Endothelial cell of umbilical vein (primary cell): ENCODE measurements at regions of chr15 and their contacts with region 1.

Region 1: DNA sequence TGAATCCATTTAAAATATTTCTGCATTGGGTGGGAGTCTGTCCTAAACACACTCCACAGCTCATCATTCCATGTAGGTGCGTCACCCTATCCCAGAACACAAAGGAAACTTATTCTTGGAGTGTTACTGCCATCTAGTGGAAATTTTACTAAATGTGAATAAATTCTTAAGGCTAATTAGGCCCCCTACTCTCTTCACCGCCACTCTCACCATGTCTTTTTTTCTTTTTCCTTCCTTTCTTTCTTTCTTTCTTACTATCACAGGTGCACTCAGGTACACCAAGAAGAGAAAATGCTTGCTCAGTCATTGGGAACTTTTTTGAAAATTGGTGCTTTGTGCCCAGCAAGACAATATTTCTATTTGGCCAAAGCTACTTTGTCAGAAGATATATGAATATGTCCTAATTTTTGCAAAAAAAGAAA is 26.4 kb upstream of the ATP8B4 start:
- DNase-seq: peak; percentile 73
- H3K4me3 ChIP-seq: no peak overlapping the region
- H3K27ac ChIP-seq: no peak overlapping the region
- H3K4me1 ChIP-seq: peaks cover 2% of the 10 kb centered on the region
- H3K27me3 ChIP-seq: no peaks in the 10 kb centered on the region
- CTCF ChIP-seq: peak; percentile 16 to 25
- POLR2A ChIP-seq: no peak

Region 2: GRCh38 chr15:48855501-48856440 is 1289.7 kb before region 1 on chr15:
- CTCF ChIA-PET with region 1: interaction called, 69 read pairs
- POLR2A ChIA-PET with region 1: no interaction called
- dilution Hi-C with region 1: no loop called
- intact Hi-C with region 1: no loop called
- DNase-seq: peak; percentile 61
- H3K4me3 ChIP-seq: no peak overlapping the region
- H3K27ac ChIP-seq: no peak overlapping the region
- H3K4me1 ChIP-seq: no peaks in the 10 kb centered on the region
- H3K27me3 ChIP-seq: no peaks in the 10 kb centered on the region
- CTCF ChIP-seq: peak; percentile 43 to 59
- POLR2A ChIP-seq: no peak

Region 3: DNA sequence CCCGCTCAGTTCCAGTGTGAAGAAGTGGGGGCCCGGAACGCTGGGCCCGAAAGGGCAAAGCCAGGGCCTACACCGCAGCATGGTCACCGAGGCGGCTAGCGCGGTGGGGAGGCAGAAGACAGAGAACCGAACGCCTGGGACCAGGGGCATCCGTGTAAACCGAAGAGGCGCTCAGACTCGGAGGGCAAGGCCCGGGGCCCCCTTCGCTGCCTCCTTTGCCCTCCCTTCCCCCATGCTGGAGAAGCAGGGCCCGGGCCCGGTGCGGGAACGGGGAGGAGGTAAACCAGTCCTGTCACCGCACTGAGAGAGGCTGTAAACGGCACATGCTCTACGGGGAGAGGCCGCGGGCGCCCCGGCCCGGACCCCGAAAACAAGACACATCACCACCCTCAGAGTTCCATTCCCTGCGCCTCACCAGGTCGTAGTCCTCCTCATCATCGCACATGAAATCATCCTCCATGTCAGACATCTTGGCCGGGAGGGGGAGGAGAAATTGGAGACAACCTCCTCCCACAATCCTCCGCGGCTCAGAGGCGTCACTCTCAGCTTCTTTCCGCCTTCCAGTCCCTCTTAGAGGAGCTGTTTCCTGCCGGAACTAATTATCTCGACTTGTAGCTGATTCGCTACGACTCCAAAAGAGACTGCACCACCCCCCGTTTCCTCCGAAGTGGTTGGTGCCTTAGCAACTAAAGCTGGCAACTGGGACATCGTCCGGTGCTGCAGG is 990.2 kb before region 1 on chr15 and contains the start of gene COPS2:
- CTCF ChIA-PET with region 1: interaction called, 3 read pairs
- POLR2A ChIA-PET with region 1: no interaction called
- dilution Hi-C with region 1: no loop called
- intact Hi-C with region 1: loop called (anchors 10 kb)
- DNase-seq: peak; percentile 99
- H3K4me3 ChIP-seq: peak within 1 kb of the TSS; percentile 82 to 96 (median 83)
- H3K27ac ChIP-seq: peak within 1 kb of the TSS; percentile 62
- H3K4me1 ChIP-seq: peaks cover 23% of the 10 kb centered on the region
- H3K27me3 ChIP-seq: no peaks in the 10 kb centered on the region
- CTCF ChIP-seq: no peak
- POLR2A ChIP-seq: peak; percentile 60
- total RNA-seq, gene COPS2: 74.9 and 79.3 TPM in 2 replicates

Region 4: DNA sequence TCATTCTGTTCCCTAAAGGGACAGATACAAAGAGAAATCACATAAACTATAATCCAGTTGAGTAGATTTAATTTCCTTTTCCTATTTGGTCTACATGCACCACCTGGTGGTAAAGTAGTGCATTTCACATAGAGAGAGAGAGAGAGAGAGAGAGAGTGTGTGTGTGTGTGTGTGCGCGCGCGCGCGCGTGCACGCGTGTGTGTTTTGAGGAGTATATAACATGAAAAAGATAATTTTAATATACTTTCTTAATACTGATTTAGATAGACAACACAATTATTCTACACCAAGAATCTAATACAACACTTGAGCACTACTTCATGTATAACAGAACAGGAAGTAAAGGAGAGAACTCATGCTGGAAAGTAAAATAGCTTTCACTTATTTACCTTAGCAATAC is 723.5 kb before region 1 on chr15:
- CTCF ChIA-PET with region 1: interaction called, 33 read pairs
- POLR2A ChIA-PET with region 1: no interaction called
- dilution Hi-C with region 1: no loop called
- intact Hi-C with region 1: loop called (anchors 5 kb)
- DNase-seq: peak; percentile 65
- H3K4me3 ChIP-seq: peak overlapping the region in 1 of 3 experiments; percentile 9
- H3K27ac ChIP-seq: no peak overlapping the region
- H3K4me1 ChIP-seq: peaks cover 2% of the 10 kb centered on the region
- H3K27me3 ChIP-seq: peaks cover 0 to 3% of the 10 kb centered on the region in 2 experiments
- CTCF ChIP-seq: peak; percentile 58 to 78
- POLR2A ChIP-seq: no peak

Region 5: GRCh38 chr15:50003786-50004334 is 141.6 kb before region 1 on chr15:
- CTCF ChIA-PET with region 1: interaction called, 24 read pairs
- POLR2A ChIA-PET with region 1: no interaction called
- dilution Hi-C with region 1: no loop called
- intact Hi-C with region 1: loop called (anchors 2 kb)
- DNase-seq: peak; percentile 63
- H3K4me3 ChIP-seq: no peak overlapping the region
- H3K27ac ChIP-seq: no peak overlapping the region
- H3K4me1 ChIP-seq: no peaks in the 10 kb centered on the region
- H3K27me3 ChIP-seq: peaks cover 0 to 28% of the 10 kb centered on the region in 2 experiments
- CTCF ChIP-seq: peak; percentile 74 to 75
- POLR2A ChIP-seq: no peak

Region 6: DNA sequence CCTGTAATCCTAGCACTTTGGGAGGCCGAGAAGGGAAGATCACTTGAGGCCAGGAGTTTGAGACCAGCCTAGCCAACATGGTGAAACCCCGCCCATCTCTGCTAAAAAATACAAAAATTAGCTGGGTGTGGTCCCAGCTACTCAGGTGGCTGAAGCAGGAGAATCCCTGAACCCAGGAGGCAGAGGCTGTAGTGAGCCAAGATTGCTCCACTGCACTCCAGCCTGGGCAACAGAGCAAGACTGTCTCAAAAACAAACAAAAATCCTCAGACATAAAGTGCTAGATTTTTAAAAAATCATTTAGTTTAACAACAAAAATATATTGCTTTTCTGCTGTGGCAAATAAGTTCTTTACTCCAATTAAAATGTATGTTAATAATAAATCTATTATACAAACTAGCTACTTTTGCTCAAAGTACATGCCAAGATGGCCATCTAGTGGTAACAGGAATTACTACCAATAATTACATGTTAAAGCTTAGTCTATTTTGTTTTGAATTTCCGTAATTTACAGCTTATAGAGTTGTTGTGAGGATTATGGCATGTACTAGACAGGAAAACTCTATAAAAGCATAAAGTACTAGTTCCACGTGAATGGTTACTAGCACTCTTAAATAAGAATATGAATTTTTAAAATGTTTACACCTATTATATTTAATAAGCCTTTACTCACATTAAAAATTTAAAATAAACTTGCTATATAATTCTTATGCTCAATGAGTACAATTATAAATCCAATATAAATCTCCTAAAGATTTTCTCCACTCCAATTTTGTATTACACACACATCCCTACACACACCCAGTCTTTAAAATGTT is 170.6 kb after region 1 on chr15:
- CTCF ChIA-PET with region 1: interaction called, 27 read pairs
- POLR2A ChIA-PET with region 1: no interaction called
- dilution Hi-C with region 1: no loop called
- intact Hi-C with region 1: loop called (anchors 1 kb)
- DNase-seq: peak; percentile 52
- H3K4me3 ChIP-seq: no peak overlapping the region
- H3K27ac ChIP-seq: no peak overlapping the region
- H3K4me1 ChIP-seq: no peaks in the 10 kb centered on the region
- H3K27me3 ChIP-seq: no peaks in the 10 kb centered on the region
- CTCF ChIP-seq: peak; percentile 32 to 39
- POLR2A ChIP-seq: no peak